Activated B cell treated with CpG ODN at 0.5 μM for 24 hours (primary cell): ENCODE measurements at regions of chr9 and their contacts with region 1.

Region 1: DNA sequence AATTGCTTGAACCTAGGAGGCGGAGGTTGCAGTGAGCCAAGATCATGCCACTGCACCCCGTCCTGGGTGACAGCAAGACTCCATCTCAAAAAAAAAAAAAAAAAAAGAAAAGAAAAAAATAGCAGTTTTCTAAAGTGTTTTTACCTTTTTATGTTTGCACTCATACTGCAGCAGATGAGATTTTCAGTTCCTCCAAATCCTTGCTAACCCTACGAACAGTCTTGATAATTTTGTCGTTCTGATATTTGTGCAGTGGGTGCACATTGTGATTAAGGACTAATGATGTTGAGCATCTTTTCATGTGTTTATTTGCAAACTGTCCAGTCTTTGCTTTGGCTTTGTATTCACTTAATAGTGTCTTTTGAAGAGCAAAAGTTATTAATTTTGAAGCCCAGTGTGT is 42.9 kb downstream of the ZCCHC7 start:
- DNase-seq: no peak
- ATAC-seq: peak; percentile 65
- H3K4me3 Mint-ChIP-seq: peak overlapping the region; percentile 11
- H3K27ac Mint-ChIP-seq: peak overlapping the region; percentile 72
- H3K4me1 Mint-ChIP-seq: peaks cover 57% of the 10 kb centered on the region
- H3K27me3 Mint-ChIP-seq: no peaks in the 10 kb centered on the region
- CTCF ChIP-seq: no peak

Region 2: DNA sequence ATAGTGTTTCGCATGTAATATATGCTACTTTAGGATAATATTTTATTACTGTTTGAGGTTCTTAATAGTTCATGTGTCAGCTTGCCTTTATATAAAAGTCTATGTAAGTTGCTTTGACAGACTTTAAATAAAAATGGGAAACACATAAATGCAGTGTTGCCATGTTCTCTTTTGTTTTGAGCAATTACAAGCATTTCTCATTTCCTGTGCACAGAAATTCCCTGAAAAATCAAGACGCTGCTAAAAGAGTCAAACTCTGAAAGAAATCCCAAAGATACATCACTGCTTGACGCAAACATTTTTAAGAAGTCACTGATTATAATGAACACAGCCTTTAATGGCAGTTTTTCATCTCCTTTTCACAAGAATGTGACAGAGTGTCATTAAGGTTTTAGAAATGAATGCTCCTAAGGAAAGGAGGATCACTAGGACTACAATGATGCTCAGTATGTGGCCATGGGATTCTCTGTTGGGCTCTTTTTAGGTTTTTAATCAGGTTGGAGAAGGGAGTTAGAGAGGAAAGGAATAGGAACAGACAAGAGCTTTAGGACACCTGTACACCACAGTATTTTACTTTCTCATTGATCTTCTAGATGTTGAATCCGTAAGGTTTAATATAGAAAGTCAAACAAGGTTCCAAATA is 13.5 kb before region 1 on chr9:
- CTCF ChIA-PET with region 1: no interaction called
- POLR2A ChIA-PET with region 1: interaction called, 10 read pairs
- intact Hi-C with region 1: loop called (anchors 2 kb)
- DNase-seq: no peak
- ATAC-seq: no peak
- H3K4me3 Mint-ChIP-seq: no peak overlapping the region
- H3K27ac Mint-ChIP-seq: peak overlapping the region; percentile 2
- H3K4me1 Mint-ChIP-seq: peaks cover 58% of the 10 kb centered on the region
- H3K27me3 Mint-ChIP-seq: no peaks in the 10 kb centered on the region
- CTCF ChIP-seq: no peak